Endothelial cell of umbilical vein (primary cell): ENCODE measurements at regions of chr1 and their contacts with region 1.

Region 1: GRCh38 chr1:184296466-184297243 is 90.2 kb upstream of the C1orf21 start:
- DNase-seq: peak; percentile 97
- H3K4me3 ChIP-seq: no peak overlapping the region
- H3K27ac ChIP-seq: peak overlapping the region; percentile 74
- H3K4me1 ChIP-seq: peaks cover 35% of the 10 kb centered on the region
- H3K27me3 ChIP-seq: no peaks in the 10 kb centered on the region
- CTCF ChIP-seq: no peak
- POLR2A ChIP-seq: no peak

Region 2: GRCh38 chr1:184258525-184258924 is 38.1 kb before region 1 on chr1:
- CTCF ChIA-PET with region 1: interaction called, 3 read pairs
- POLR2A ChIA-PET with region 1: no interaction called
- dilution Hi-C with region 1: no loop called
- intact Hi-C with region 1: loop called (anchors 2 kb)
- DNase-seq: peak; percentile 43
- H3K4me3 ChIP-seq: no peak overlapping the region
- H3K27ac ChIP-seq: no peak overlapping the region
- H3K4me1 ChIP-seq: peaks cover 27% of the 10 kb centered on the region
- H3K27me3 ChIP-seq: no peaks in the 10 kb centered on the region
- CTCF ChIP-seq: no peak
- POLR2A ChIP-seq: no peak

Region 3: DNA sequence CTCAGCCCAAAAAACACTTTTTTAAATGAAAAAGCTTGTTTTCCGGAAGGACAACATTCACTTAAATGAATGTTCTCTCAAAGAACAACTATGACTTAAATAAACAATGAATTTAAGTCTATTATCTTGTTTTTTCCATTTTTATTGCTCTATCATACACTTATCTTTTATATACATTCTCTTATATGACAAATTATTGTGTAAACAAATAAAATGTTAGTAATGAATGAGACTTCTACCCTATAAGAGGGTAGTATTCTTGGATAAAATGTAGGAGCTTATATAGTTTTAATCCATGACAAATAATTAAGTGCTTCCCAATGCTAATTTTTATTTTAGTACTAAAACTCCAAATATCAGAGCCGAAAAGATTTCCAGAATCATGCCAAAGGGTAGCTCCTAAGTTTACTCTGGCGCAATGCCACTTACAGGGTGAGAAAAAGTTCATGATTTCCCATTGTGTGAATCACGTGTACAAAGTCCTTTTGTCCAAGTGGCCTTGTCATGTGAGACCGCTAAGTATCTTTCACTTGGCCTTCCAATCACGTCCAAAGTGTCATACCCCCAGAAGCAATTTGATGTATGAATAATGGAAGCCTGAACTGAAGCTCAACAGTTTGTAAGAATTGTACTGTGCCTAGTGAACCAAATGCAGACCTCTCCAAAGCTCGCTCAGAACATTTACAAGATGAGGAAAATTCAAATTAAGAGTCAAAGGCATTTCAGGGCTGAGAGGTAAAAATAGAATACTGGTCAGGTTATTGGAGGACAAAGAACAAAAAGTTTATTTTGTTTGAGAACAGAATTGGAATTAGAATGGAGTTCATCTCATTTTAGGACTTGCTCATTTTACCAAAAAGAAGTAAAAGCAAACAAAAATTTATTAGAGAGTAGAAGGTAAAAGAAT is 33.6 kb after region 1 on chr1:
- CTCF ChIA-PET with region 1: interaction called, 6 read pairs
- POLR2A ChIA-PET with region 1: no interaction called
- dilution Hi-C with region 1: no loop called
- intact Hi-C with region 1: loop called (anchors 1 kb)
- DNase-seq: peak; percentile 97
- H3K4me3 ChIP-seq: no peak overlapping the region
- H3K27ac ChIP-seq: no peak overlapping the region
- H3K4me1 ChIP-seq: peaks cover 22% of the 10 kb centered on the region
- H3K27me3 ChIP-seq: peaks cover 5 to 7% of the 10 kb centered on the region in 2 experiments
- CTCF ChIP-seq: no peak
- POLR2A ChIP-seq: no peak

Region 4: DNA sequence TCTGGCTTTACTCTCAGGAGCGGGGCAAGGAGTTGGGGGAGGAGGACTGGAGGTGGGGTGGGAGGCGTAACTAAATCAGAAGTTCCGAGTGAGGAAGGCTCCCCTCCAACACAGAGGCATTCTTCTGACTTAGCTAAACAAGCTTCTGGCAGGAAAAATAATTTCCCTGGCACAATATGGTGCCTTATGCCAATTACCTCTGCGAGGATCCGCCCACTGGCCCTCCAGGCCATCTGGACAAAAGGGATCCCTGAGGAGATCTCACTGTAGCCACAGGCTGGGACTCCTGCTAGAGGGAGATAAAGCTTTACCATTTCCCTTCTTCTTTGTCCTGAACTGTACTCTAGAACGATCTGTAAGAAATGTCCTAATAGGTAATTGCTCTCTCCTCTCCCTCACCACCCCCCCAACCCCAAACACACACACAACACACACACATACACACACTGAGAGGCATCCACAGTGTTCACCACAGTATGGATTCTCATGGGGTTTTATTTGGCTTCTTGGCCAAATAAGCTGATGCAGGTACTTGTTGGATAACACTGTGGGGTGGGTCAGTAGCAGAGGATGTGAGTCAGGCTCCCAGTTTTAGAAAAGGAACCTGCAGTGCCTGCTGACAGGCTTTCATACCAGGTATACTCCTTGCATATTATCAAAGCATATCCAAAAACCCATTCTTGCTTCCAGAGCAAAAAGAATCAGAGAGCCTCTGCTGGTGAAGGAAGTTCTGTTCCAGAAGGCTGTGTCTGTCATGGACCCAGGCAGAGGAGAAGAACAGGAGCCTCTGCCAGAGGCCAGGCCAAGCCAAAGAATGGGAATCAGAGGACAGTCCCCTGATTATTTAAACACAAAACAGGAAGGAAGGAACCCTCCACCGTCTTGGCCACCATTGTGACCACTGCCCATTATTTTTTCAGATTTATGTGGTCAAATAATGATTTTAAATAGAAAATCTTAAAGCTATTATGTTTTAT is 259.3 kb after region 1 on chr1:
- CTCF ChIA-PET with region 1: no interaction called
- POLR2A ChIA-PET with region 1: no interaction called
- dilution Hi-C with region 1: no loop called
- intact Hi-C with region 1: loop called (anchors 5 kb)
- DNase-seq: no peak
- H3K4me3 ChIP-seq: no peak overlapping the region
- H3K27ac ChIP-seq: no peak overlapping the region
- H3K4me1 ChIP-seq: no peaks in the 10 kb centered on the region
- H3K27me3 ChIP-seq: no peaks in the 10 kb centered on the region
- CTCF ChIP-seq: no peak
- POLR2A ChIP-seq: no peak